PC-9 (cell line): ENCODE measurements at regions of chr6 and their contacts with region 1.

Region 1: DNA sequence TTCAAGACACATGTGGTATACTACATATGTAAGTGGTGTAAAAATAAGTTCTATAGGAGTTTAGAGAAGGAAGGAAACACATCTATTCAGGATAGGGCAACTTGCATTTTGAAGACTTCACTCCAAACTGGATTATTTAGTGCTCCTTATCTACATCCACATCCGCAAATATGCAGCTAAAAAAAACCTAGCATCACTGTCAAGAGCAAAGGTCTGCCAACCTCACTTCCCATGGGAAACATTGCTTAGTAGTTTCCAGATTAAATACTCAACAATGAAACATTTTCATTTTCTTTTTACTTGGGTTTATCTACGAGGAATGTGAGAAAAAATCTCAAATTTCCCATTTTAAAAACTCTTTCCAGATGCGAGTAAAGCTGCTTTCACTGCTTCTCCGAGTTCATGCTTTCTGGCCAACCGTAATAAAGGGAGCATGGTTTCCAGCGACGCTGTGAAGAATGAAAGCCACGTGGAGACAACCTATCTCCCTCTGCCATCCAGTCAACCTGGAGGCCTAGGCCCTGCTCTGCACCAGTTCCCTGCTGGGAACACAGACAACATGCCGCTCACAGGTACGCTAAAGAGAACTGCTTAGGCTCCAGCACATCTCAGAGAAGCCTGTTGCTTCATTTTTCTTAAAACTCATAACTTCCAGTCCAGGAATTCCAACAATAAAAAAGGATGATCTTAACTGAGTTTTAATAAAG is 48.2 kb downstream of the RFX6 start:
- DNase-seq: no peak
- H3K4me3 ChIP-seq: no peak overlapping the region
- H3K27ac ChIP-seq: no peak overlapping the region
- H3K4me1 ChIP-seq: no peaks in the 10 kb centered on the region
- H3K27me3 ChIP-seq: no peaks in the 10 kb centered on the region
- CTCF ChIP-seq: no peak

Region 2: GRCh38 chr6:116779573-116780164 is 145.6 kb before region 1 on chr6:
- CTCF ChIA-PET with region 1: interaction called, 14 read pairs
- POLR2A ChIA-PET with region 1: no interaction called
- intact Hi-C with region 1: no loop called
- DNase-seq: no peak
- H3K4me3 ChIP-seq: no peak overlapping the region
- H3K27ac ChIP-seq: no peak overlapping the region
- H3K4me1 ChIP-seq: no peaks in the 10 kb centered on the region
- H3K27me3 ChIP-seq: no peaks in the 10 kb centered on the region
- CTCF ChIP-seq: peak; percentile 79

Region 3: DNA sequence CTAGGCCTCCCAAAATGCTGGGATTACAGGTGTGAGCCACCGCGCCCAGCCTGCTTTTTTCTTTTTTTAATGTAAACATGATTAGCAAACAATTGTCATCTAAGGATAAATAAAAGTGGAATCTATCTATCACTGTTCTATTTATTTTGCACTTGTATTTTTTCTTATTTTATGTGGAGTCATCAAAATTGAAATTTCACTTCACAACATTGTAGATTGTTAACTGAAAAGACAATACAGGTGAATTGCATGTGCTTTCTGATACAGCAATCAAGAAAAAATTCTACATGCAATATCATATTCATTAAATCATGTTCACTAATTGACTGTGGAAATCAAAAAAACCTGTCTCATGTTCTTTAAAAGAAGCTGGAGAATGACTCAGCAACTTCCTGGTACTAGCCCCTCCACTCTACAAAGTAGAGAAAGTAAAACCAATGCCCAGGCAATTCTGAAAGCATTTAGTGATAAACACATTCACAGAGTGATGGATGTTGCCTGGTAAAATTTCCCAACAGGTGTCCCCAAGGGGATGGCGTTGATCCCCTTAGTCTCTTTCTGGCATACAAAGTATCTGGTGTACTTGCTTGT is 58.9 kb before region 1 on chr6:
- CTCF ChIA-PET with region 1: no interaction called
- POLR2A ChIA-PET with region 1: no interaction called
- intact Hi-C with region 1: no loop called
- DNase-seq: no peak
- H3K4me3 ChIP-seq: no peak overlapping the region
- H3K27ac ChIP-seq: no peak overlapping the region
- H3K4me1 ChIP-seq: no peaks in the 10 kb centered on the region; the same call in 1 of the 2 replicates
- H3K27me3 ChIP-seq: no peaks in the 10 kb centered on the region
- CTCF ChIP-seq: no peak